HEK293 (cell line): ENCODE measurements at regions of chr6 and their contacts with region 1.

Region 1: DNA sequence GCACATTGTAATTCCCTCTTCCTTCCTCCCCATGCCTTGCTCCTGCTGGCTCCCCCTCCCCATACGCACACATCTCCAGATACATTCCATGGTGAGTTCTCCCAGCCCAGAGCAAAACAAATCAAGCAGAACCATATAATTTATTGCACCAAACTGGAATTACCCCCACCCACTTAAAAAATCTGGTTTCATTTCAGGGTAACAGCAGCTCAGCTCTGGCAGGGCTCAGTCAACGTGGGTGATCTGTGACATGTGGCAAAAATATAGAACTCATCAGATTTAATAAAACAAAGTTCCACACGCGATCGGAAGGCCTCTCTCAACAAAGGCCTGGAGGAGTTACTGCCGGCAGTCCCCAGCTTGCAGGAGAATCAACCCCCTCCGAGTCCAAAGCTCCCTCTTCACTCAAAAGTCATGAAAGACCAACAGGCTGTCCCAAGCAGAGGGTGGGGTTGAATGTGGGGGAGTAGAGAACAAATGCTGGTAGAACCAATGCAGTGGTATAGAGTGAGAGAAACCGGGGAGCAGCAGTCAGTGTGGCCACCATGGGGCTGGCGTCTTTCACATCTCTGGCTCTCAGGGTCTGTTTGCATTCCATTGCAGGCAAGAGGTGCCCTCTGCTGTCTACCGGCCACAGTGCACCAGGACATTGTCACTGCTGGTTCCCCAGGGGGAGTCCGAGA is 323.3 kb upstream of the NT5E start:
- H3K4me3 ChIP-seq: no peak overlapping the region
- H3K27ac ChIP-seq: no peak overlapping the region
- H3K4me1 ChIP-seq: no peaks in the 10 kb centered on the region; the same call in 1 of the 2 replicates
- CTCF ChIP-seq: peak; percentile 96

Region 2: DNA sequence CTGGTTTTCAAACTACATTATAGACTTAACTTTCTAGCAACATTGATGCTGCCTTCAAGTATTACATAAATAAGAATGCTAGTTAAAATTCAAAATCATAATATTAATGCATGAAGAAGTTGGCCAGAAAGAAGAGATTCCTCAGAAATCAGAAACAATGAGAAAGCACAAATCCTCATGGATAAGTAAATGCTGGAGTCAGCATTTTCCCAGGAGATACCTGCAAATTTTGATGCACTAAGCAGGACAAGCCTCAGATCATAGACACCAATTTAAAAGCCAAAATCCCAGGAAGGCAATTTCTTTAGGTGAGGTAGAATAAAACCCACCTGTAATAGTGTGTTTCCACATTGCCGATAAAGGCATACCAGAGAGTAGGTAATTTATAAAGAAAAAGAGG is 57.0 kb before region 1 on chr6:
- CTCF ChIA-PET with region 1: interaction called, 12 read pairs
- POLR2A ChIA-PET with region 1: no interaction called
- H3K4me3 ChIP-seq: no peak overlapping the region
- H3K27ac ChIP-seq: no peak overlapping the region
- H3K4me1 ChIP-seq: no peaks in the 10 kb centered on the region
- CTCF ChIP-seq: no peak

Region 3: DNA sequence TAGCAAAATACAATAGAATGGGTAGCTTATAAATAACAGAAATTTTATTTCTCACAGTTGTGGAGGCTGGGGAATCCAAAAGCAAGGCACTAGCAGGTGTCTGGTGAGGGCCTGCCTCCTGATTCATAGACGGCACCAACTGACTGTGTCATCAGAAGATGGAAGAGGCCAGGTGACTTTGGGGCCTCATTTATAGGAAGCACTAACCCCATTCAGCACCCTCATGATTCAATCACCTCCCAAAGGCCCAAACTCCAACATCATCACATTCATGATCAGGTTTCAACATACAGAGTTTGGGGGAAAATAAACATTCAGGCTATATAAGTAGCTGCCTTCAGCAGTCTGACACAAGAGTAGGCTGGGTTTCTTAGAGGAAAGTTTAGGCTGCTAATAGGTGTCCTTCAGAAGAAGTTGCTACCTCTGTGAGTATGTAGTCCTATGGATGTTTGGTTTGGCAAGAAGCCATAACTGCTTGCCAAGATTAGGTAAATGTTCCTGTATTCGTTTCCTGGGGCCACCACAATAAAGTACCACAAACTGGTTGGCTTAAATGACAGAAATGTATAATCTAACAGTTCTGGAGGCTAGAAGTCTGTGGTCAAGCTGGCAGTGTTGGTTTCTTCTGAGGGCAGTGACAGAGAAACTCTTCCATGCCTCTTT is 372.1 kb after region 1 on chr6:
- CTCF ChIA-PET with region 1: no interaction called
- POLR2A ChIA-PET with region 1: no interaction called
- H3K4me3 ChIP-seq: no peak overlapping the region
- H3K27ac ChIP-seq: peak overlapping the region; percentile 1; the same call in 1 of the 2 replicates
- H3K4me1 ChIP-seq: peaks cover 15% of the 10 kb centered on the region
- CTCF ChIP-seq: no peak

Region 4: DNA sequence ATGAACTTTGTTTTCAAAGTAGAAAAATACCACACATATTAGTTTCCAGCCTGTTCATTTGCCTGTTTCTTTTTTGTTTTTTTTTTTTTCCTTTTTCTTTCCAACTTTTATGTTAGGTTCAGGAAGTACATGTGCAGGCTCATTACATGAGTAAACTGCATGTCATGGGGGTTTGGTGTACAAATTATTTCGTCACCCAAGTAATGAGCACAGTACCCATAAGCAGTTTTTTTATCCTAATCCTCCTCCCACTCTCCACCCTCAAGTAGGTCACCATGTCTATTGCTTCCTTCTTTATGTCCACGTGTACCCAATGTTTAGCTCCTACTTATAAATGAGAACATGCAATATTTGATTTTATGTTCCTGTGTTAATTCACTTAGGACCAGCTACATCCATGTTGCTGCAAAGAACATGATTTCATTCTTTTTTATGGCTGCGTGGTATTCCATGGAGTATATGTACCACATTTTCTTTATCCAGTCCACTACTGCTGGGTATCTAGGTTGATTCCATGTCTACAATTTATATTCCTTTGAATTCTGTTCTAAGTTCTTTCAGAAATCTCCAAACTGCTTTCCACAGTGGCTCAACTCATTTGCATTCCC is 435.2 kb after region 1 on chr6:
- CTCF ChIA-PET with region 1: no interaction called
- POLR2A ChIA-PET with region 1: no interaction called
- H3K4me3 ChIP-seq: no peak overlapping the region
- H3K27ac ChIP-seq: no peak overlapping the region
- H3K4me1 ChIP-seq: no peaks in the 10 kb centered on the region
- CTCF ChIP-seq: no peak